ENCODE measurements at regions of chr21 and their contacts with region 1.

Region 1: GRCh38 chr21:15084668-15085067 is 19.9 kb upstream of the NRIP1 start:
- DNase-seq: no peak
- H3K4me3 ChIP-seq: no peak overlapping the region
- H3K27me3 ChIP-seq: no peaks in the 10 kb centered on the region; the same call in 1 of the 2 replicates
- CTCF ChIP-seq: no peak

Region 2: DNA sequence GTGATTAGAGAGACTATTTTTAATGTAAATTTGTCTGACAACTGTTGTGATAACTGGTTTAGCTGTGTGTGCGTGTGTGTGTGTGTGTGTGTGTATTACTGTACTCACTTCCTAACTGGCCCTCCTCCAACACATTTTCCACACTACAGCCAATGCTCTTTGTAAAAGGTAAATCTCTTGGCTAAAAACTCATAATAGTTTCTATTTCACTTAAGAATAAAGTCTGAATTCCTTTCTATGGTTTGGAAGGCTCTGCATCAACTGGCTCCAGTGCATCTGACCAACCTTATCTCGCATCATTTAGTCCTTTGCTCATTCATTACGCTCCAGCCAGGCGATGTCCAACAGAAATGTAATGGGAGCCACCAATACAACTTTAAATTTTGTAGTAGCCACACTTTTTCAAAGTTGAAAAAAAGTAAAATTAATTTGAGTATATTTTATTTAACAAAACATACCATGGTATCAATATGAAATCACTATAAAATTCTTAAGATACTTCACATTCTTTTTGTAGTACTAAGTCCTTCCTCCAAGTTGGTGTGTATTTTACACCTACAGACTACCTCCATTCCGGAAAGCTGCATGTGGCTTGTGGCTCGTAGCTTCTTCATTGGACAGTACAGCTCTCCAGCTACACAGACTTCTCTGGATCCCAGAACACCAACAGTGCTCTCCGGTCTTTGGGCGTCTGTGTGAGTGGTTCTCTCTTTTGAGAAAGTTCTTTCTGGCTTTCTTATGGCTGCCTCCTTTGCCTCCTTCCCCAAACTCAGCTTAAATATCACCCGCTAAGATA is 88.8 kb before region 1 on chr21:
- CTCF ChIA-PET with region 1: no interaction called
- POLR2A ChIA-PET with region 1: interaction called, 10 read pairs
- DNase-seq: no peak
- H3K4me3 ChIP-seq: no peak overlapping the region
- H3K27me3 ChIP-seq: no peaks in the 10 kb centered on the region
- CTCF ChIP-seq: no peak

Region 3: GRCh38 chr21:15034126-15034853 is 50.4 kb before region 1 on chr21:
- CTCF ChIA-PET with region 1: no interaction called
- POLR2A ChIA-PET with region 1: no interaction called
- DNase-seq: peak; percentile 33
- H3K4me3 ChIP-seq: no peak overlapping the region
- H3K27me3 ChIP-seq: no peaks in the 10 kb centered on the region
- CTCF ChIP-seq: no peak

Measured in BJ (cell line).